HEK293 (cell line): ENCODE measurements at regions of chr18 and their contacts with region 1.

Region 1: DNA sequence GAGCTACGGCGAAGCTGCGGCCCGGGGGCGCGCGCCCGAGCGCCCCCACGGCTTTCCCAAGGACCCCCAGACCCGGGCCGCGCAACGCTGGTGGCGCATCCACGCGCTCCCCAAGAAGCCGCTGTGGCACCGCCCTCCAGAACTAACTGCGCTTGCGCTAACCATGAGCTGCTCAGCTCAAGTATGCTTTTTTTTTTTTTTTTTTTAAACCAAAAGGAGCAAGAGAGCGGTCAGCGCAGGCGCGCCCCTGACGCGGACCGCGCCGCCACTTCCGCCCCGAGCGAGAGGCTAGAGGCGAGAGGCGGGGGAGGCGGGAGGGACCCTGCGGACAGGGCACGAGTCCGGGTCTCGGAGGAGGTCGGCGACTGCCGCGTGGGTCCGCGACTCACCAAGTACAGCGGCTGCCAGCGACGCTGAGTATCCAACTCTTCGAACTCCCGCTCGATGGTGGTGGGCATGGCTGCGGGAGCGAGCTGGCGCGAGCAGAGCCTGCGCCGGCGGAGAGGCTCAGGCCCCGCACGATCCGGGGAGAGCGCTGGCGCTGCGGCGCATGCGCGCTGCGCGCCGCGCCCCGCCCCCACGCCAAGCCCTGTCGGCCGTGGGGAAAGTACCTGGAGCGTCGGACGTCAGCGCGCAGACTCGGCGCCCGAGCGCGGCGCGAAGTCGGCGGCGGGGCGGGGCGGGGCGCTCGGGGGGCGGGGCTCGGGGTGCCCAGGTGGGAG is at the start of gene PTPN2:
- H3K4me3 ChIP-seq: peak within 1 kb of the TSS; percentile 84
- H3K27ac ChIP-seq: peak within 1 kb of the TSS; percentile 95
- H3K4me1 ChIP-seq: peaks cover 17% of the 10 kb centered on the region
- CTCF ChIP-seq: no peak

Region 2: GRCh38 chr18:12376718-12377555 is 506.9 kb before region 1 on chr18 and contains the start of gene AFG3L2:
- CTCF ChIA-PET with region 1: no interaction called
- POLR2A ChIA-PET with region 1: interaction called, 14 read pairs
- H3K4me3 ChIP-seq: peak within 1 kb of the TSS; percentile 68
- H3K27ac ChIP-seq: peak within 1 kb of the TSS; percentile 99
- H3K4me1 ChIP-seq: peaks cover 16% of the 10 kb centered on the region
- CTCF ChIP-seq: no peak

Region 3: DNA sequence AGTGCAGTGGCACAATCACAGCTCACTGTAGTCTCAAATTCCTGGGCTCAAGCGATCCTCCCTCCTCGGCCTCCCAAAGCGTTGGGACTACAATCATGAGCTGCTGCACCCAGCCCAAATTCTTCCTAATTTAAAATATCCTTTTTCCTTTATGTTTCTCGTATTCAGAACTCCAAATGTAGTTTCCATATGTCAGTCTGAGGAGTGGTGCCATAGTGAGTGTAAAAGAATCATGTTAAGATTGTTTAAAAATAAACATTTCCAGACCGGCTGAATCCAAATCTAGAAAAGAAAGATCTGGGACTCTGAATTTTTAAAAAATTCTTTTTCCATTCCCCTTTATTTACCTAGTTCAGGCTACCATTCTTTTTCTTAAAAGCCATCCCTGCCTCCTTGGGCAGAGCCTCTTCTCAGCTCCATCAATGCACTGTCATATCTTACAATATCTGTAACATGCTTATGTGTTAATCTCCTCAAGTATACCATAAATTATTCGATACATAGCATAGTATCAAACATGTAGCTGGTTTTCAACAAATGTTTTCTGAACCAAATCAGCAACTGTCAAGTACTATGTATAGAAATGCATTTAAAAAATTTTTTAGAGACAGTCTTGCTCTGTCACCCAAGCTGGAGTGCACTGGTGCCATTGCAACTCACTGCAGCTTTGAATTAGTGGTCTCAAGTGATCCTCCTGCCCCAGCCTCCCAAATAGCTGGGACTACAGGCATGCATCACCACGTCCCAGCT is 31.1 kb before region 1 on chr18:
- CTCF ChIA-PET with region 1: interaction called, 3 read pairs
- POLR2A ChIA-PET with region 1: interaction called, 15 read pairs
- H3K4me3 ChIP-seq: no peak overlapping the region
- H3K27ac ChIP-seq: no peak overlapping the region
- H3K4me1 ChIP-seq: peaks cover 4% of the 10 kb centered on the region; the same call in 1 of the 2 replicates
- CTCF ChIP-seq: no peak

Region 4: GRCh38 chr18:12868576-12868975 is 15.3 kb before region 1 on chr18:
- CTCF ChIA-PET with region 1: interaction called, 6 read pairs
- POLR2A ChIA-PET with region 1: interaction called, 32 read pairs
- H3K4me3 ChIP-seq: no peak overlapping the region
- H3K27ac ChIP-seq: no peak overlapping the region
- H3K4me1 ChIP-seq: no peaks in the 10 kb centered on the region; the same call in 1 of the 2 replicates
- CTCF ChIP-seq: no peak

Region 5: DNA sequence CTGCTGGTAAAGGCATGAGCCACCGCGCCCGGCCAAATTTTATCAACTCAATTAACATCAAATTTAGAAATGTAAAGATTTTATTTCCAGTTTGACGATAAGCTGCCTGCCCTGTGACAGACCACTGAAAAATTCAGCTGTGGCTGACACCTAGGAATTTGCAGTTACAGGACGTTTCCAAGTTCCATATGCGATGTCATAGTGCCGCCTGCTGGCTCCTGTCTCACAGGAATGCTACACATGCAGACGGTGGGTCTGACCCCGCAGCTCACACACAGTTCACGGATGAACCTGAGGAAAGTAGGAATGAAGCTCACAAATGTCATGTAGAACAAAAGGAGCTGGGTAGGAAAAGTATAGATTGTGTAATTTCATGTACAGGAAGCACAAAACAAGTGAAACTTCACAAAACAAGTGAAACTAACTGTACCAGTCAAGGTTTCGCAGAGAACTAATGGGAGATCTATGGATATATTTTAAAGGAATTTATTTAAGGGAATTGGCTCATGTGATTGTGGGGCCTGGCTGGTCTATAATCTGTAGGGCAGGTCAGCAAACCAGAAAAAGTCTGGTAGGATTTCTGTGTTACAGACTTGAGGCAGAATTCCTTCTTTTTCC is 50.7 kb after region 1 on chr18:
- CTCF ChIA-PET with region 1: interaction called, 8 read pairs
- POLR2A ChIA-PET with region 1: interaction called, 12 read pairs
- H3K4me3 ChIP-seq: no peak overlapping the region
- H3K27ac ChIP-seq: no peak overlapping the region
- H3K4me1 ChIP-seq: no peaks in the 10 kb centered on the region
- CTCF ChIP-seq: peak; percentile 91

Region 6: DNA sequence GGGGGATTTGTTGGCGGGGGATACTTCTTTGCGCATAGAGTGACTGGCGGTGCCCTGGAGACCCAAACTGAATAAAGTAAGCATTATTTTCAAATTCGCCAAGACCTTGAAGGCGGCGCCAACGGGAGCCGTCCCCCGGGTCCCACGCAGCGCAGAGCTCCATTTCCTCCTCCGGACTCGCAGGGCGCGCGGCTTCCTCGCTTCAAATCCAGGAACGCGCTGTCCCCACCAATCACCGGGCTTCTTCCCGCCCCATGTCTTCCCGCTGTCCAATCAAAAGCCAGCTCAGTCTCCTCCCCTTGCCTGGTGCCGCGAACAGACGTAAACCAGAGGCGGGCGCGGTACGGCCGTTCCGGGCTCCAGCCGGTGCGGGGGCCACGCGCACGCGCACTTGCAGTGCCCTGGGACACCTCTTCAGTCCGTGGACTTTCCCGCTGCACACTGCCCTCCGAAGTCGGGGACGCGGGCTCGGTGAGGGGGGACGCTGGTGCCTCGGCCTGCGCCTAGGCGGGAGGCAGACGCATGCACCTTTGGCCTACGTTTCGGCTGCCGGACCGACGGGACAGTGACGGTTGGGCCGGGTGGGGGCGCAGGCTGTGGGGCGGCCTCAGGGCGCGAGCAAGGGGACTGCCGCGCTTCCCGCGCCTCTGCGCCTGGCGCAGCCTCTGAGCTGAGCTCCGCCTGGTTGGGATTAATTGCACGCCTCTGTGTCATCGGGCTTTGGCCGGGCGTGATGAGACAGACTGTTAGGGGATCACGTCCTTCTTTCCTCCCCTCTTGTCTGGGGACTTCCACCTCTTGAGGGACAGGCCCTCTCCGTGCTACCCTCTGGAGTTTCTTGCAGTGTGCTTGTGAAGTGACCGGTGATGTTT is 107.4 kb after region 1 on chr18 and contains the start of gene CEP192:
- CTCF ChIA-PET with region 1: no interaction called
- POLR2A ChIA-PET with region 1: interaction called, 12 read pairs
- H3K4me3 ChIP-seq: peak within 1 kb of the TSS; percentile 83
- H3K27ac ChIP-seq: peak within 1 kb of the TSS; percentile 91
- H3K4me1 ChIP-seq: peaks cover 13% of the 10 kb centered on the region; the same call in 1 of the 2 replicates
- CTCF ChIP-seq: peak; percentile 96